ENCODE measurements at regions of chr10 and their contacts with region 1.

Region 1: DNA sequence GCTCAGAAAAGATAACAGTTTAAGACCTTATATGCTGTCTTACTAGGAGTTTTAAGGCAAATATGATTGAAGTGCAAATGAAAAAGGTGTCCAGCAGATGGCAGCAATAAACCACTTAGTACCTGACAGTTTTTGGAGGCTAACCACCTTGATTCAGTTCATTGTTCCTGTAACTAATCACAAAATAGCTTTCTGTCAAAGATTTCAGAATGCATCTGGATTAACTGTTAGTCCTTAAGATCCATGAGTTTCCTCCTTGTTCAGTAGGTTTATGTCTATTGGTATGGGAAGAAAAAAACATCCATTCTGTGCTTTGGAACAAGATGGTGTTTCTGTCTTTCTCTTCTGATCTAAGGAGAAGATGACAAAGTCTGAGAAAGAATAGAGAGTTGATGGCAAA is 46.6 kb downstream of the CCSER2 start:
- DNase-seq: no peak
- ATAC-seq: no peak
- H3K4me3 ChIP-seq: no peak overlapping the region
- H3K27ac ChIP-seq: no peak overlapping the region
- H3K4me1 ChIP-seq: no peaks in the 10 kb centered on the region
- H3K27me3 ChIP-seq: no peaks in the 10 kb centered on the region

Region 2: GRCh38 chr10:84214612-84215235 is 160.3 kb before region 1 on chr10:
- intact Hi-C with region 1: no loop called
- DNase-seq: no peak
- ATAC-seq: no peak
- H3K4me3 ChIP-seq: no peak overlapping the region
- H3K27ac ChIP-seq: no peak overlapping the region
- H3K4me1 ChIP-seq: no peaks in the 10 kb centered on the region
- H3K27me3 ChIP-seq: no peaks in the 10 kb centered on the region

Region 3: DNA sequence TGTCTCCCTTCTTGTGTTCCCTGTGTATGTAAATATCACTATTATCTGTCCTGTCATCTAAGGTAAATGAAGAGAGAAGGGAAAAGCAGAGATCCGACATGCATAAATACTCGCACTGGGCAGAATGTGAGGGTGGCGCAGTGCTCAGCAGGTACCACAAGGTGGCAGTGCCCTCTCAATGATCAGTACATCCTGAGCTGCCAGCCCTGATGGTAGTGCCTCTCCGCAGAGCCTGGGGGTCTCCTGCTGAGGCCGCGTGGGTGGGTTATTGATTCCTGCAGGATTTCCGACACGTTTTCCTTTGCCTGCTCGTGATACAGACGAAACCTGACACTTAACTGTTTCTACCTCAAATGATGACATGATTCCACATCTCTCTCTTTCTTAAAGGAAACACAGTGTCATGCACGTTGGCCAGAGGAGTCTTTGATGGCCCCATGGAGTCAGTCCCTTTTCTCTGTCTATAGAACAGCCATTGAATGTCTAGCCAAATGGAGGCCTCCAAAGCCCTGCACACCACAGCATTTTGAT is 110.3 kb before region 1 on chr10:
- intact Hi-C with region 1: loop called in 2 of 4 experiments (anchors 5 to 10 kb)
- DNase-seq: peak; percentile 61 to 87 (median 76)
- ATAC-seq: peak; percentile 91 to 94
- H3K4me3 ChIP-seq: no peak overlapping the region
- H3K27ac ChIP-seq: no peak overlapping the region
- H3K4me1 ChIP-seq: no peaks in the 10 kb centered on the region
- H3K27me3 ChIP-seq: no peaks in the 10 kb centered on the region

Region 4: GRCh38 chr10:84452003-84452402 is 77.0 kb after region 1 on chr10:
- intact Hi-C with region 1: no loop called
- DNase-seq: no peak
- ATAC-seq: no peak
- H3K4me3 ChIP-seq: no peak overlapping the region
- H3K27ac ChIP-seq: no peak overlapping the region
- H3K4me1 ChIP-seq: no peaks in the 10 kb centered on the region
- H3K27me3 ChIP-seq: no peaks in the 10 kb centered on the region

Region 5: GRCh38 chr10:84626397-84627087 is 251.5 kb after region 1 on chr10:
- intact Hi-C with region 1: no loop called
- DNase-seq: no peak
- ATAC-seq: no peak
- H3K4me3 ChIP-seq: no peak overlapping the region
- H3K27ac ChIP-seq: no peak overlapping the region
- H3K4me1 ChIP-seq: no peaks in the 10 kb centered on the region
- H3K27me3 ChIP-seq: no peaks in the 10 kb centered on the region